ENCODE measurements at regions of chr17 and their contacts with region 1.

Region 1: GRCh38 chr17:75749545-75750389 is 15.2 kb downstream of the GALK1 start:
- DNase-seq: peak; percentile 76 to 89 (median 83)
- H3K4me3 ChIP-seq: no peak overlapping the region
- H3K4me3 Mint-ChIP-seq: peak overlapping the region in 4 of 7 donors; percentile 0 to 40 (median 24)
- H3K27ac ChIP-seq: no peak overlapping the region
- H3K27ac Mint-ChIP-seq: no peak overlapping the region
- H3K4me1 ChIP-seq: peaks cover 17% of the 10 kb centered on the region
- H3K4me1 Mint-ChIP-seq: peaks cover 13 to 21% (median 14%) of the 10 kb centered on the region in 3 donors
- H3K27me3 ChIP-seq: no peaks in the 10 kb centered on the region
- H3K27me3 Mint-ChIP-seq: peaks cover 0 to 4% of the 10 kb centered on the region in 2 donors

Region 2: GRCh38 chr17:75632863-75633485 is 116.8 kb before region 1 on chr17 and contains the start of gene SMIM5:
- CTCF ChIA-PET with region 1: interaction called, 181 read pairs
- POLR2A ChIA-PET with region 1: no interaction called
- DNase-seq: peak; percentile 61 to 84 (median 74)
- H3K4me3 ChIP-seq: no peak within 1 kb of the TSS
- H3K4me3 Mint-ChIP-seq: no peak within 1 kb of the TSS
- H3K27ac ChIP-seq: no peak within 1 kb of the TSS
- H3K27ac Mint-ChIP-seq: peak within 1 kb of the TSS in 2 of 8 donors; percentile 4 to 63
- H3K4me1 ChIP-seq: peaks cover 14% of the 10 kb centered on the region
- H3K4me1 Mint-ChIP-seq: peaks cover 2 to 13% (median 4%) of the 10 kb centered on the region in 3 donors
- H3K27me3 ChIP-seq: no peaks in the 10 kb centered on the region
- H3K27me3 Mint-ChIP-seq: no peaks in the 10 kb centered on the region
- total RNA-seq, gene SMIM5: 0.20 TPM in 1 of 2 experiments, not detected in the other

Region 3: GRCh38 chr17:75673487-75673886 is 76.3 kb before region 1 on chr17:
- CTCF ChIA-PET with region 1: interaction called, 77 read pairs
- POLR2A ChIA-PET with region 1: no interaction called
- DNase-seq: no peak
- H3K4me3 ChIP-seq: no peak overlapping the region
- H3K4me3 Mint-ChIP-seq: peak overlapping the region in 1 of 7 donors; percentile 40
- H3K27ac ChIP-seq: no peak overlapping the region
- H3K27ac Mint-ChIP-seq: peak overlapping the region in 1 of 8 donors; percentile 40
- H3K4me1 ChIP-seq: peaks cover 8% of the 10 kb centered on the region
- H3K4me1 Mint-ChIP-seq: peaks cover 21 to 36% (median 23%) of the 10 kb centered on the region in 3 donors
- H3K27me3 ChIP-seq: no peaks in the 10 kb centered on the region
- H3K27me3 Mint-ChIP-seq: no peaks in the 10 kb centered on the region

Region 4: GRCh38 chr17:75707131-75707571 is 42.6 kb before region 1 on chr17:
- CTCF ChIA-PET with region 1: no interaction called
- POLR2A ChIA-PET with region 1: no interaction called
- DNase-seq: no peak
- H3K4me3 ChIP-seq: no peak overlapping the region
- H3K4me3 Mint-ChIP-seq: no peak overlapping the region
- H3K27ac ChIP-seq: no peak overlapping the region
- H3K27ac Mint-ChIP-seq: no peak overlapping the region
- H3K4me1 ChIP-seq: no peaks in the 10 kb centered on the region
- H3K4me1 Mint-ChIP-seq: no peaks in the 10 kb centered on the region
- H3K27me3 ChIP-seq: no peaks in the 10 kb centered on the region
- H3K27me3 Mint-ChIP-seq: no peaks in the 10 kb centered on the region

Region 5: DNA sequence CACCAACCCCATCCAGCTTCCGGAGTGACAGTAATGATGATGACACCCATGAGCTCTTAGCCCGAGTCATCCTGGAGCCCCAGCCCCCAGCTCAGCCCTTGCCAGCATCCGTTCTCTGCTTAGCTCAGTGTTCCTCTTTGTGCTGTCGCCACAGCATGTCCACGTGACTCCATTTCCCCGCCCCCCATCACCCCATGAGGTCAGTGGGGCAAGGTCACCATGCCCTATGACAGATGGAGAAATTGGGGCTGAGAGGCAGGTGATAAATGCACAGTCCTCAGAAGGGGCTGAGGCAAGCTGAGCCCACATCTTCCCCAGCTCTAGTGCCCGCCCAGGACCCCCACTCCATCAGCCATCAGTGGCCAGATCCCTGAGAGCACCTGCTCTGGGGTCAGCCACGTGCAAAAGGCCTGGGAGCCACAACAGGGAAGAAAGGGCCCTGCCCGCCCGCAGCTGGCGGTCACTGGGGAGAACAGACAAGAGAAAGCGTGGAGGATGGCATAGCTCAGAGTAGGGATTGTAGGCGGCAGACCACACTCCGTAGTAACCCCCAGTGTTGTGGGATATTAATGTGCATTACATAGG is 11.5 kb before region 1 on chr17:
- CTCF ChIA-PET with region 1: interaction called, 16 read pairs
- POLR2A ChIA-PET with region 1: no interaction called
- DNase-seq: no peak
- H3K4me3 ChIP-seq: no peak overlapping the region
- H3K4me3 Mint-ChIP-seq: no peak overlapping the region
- H3K27ac ChIP-seq: no peak overlapping the region
- H3K27ac Mint-ChIP-seq: peak overlapping the region in 1 of 8 donors; percentile 77
- H3K4me1 ChIP-seq: no peaks in the 10 kb centered on the region
- H3K4me1 Mint-ChIP-seq: peaks cover 4 to 8% (median 4%) of the 10 kb centered on the region in 3 donors
- H3K27me3 ChIP-seq: no peaks in the 10 kb centered on the region
- H3K27me3 Mint-ChIP-seq: no peaks in the 10 kb centered on the region

Region 6: GRCh38 chr17:75779231-75779986 is 29.6 kb after region 1 on chr17:
- CTCF ChIA-PET with region 1: interaction called, 29 read pairs
- POLR2A ChIA-PET with region 1: interaction called, 19 read pairs
- DNase-seq: peak; percentile 84 to 98 (median 95)
- H3K4me3 ChIP-seq: peak overlapping the region; percentile 86
- H3K4me3 Mint-ChIP-seq: peak overlapping the region; percentile 93 to 100 (median 98)
- H3K27ac ChIP-seq: peak overlapping the region; percentile 97
- H3K27ac Mint-ChIP-seq: peak overlapping the region; percentile 93 to 100 (median 98)
- H3K4me1 ChIP-seq: peaks cover 40% of the 10 kb centered on the region
- H3K4me1 Mint-ChIP-seq: peaks cover 51 to 69% (median 59%) of the 10 kb centered on the region in 3 donors
- H3K27me3 ChIP-seq: no peaks in the 10 kb centered on the region
- H3K27me3 Mint-ChIP-seq: peaks cover 0 to 16% of the 10 kb centered on the region in 2 donors

Region 7: GRCh38 chr17:75845049-75845860 is 95.5 kb after region 1 on chr17:
- CTCF ChIA-PET with region 1: interaction called, 25 read pairs
- POLR2A ChIA-PET with region 1: interaction called, 8 read pairs
- DNase-seq: peak in 4 of 5 donors; percentile 37 to 70 (median 42)
- H3K4me3 ChIP-seq: no peak overlapping the region
- H3K4me3 Mint-ChIP-seq: peak overlapping the region; percentile 16 to 84 (median 46)
- H3K27ac ChIP-seq: peak overlapping the region; percentile 89
- H3K27ac Mint-ChIP-seq: peak overlapping the region; percentile 30 to 89 (median 66)
- H3K4me1 ChIP-seq: peaks cover 36% of the 10 kb centered on the region
- H3K4me1 Mint-ChIP-seq: peaks cover 16 to 36% (median 17%) of the 10 kb centered on the region in 3 donors
- H3K27me3 ChIP-seq: no peaks in the 10 kb centered on the region
- H3K27me3 Mint-ChIP-seq: no peaks in the 10 kb centered on the region

Measured in CD8-positive, alpha-beta memory T cell (primary cell).